CD4-positive, alpha-beta memory T cell (primary cell): ENCODE measurements at regions of chr13 and their contacts with region 1.

Region 1: DNA sequence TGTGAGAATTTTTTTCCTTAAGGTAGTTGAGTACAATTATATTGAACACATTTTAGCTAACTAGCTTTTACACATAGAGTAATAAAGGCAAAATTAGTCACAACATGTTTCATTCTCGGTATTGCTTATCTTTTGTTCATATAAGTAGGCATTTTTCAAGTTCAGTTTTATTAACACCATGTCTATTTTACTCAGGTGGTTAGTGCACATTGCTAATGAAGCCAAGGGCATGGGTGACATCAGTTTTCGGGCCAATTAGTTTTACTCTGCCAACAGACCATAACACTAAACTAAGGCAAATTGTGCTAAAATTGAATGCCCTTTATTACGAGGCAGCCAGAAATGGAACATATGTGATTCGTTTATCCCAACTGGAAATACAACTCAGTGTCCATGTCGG is 19.6 kb upstream of the PCDH17 start:
- DNase-seq: no peak
- H3K4me3 ChIP-seq: no peak overlapping the region
- H3K4me3 Mint-ChIP-seq: no peak overlapping the region
- H3K27ac ChIP-seq: no peak overlapping the region
- H3K27ac Mint-ChIP-seq: no peak overlapping the region
- H3K4me1 ChIP-seq: no peaks in the 10 kb centered on the region
- H3K4me1 Mint-ChIP-seq: no peaks in the 10 kb centered on the region
- H3K27me3 ChIP-seq: no peaks in the 10 kb centered on the region
- H3K27me3 Mint-ChIP-seq: no peaks in the 10 kb centered on the region

Region 2: GRCh38 chr13:57624565-57625435 is 12.8 kb after region 1 on chr13:
- CTCF ChIA-PET with region 1: interaction called, 12 read pairs
- POLR2A ChIA-PET with region 1: no interaction called
- intact Hi-C with region 1: no loop called
- DNase-seq: peak in 1 of 5 donors; percentile 20
- H3K4me3 ChIP-seq: no peak overlapping the region
- H3K4me3 Mint-ChIP-seq: no peak overlapping the region
- H3K27ac ChIP-seq: no peak overlapping the region
- H3K27ac Mint-ChIP-seq: no peak overlapping the region
- H3K4me1 ChIP-seq: peaks cover 6% of the 10 kb centered on the region
- H3K4me1 Mint-ChIP-seq: peaks cover 8 to 14% (median 12%) of the 10 kb centered on the region in 4 donors
- H3K27me3 ChIP-seq: peaks cover 4% of the 10 kb centered on the region
- H3K27me3 Mint-ChIP-seq: peaks cover 14 to 20% of the 10 kb centered on the region in 2 donors

Region 3: DNA sequence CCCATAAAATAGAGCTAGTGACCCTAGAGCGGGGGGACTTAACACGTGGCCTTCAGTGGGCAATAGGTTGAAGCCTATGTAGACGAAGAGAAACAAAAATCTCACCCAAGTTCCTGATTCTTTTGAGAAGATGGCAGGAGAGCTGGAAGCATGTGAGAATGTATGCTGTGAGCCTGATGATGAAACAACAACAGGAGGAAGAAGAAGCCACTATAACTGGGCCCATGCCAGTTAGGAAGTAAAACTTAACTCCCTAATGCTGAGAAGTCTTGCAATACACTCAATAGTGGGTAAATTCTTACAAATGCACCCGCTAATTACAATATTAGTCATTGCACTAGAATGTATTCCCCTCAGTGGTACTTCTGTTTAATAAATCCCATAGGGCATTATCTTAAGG is 28.6 kb after region 1 on chr13:
- CTCF ChIA-PET with region 1: no interaction called
- POLR2A ChIA-PET with region 1: no interaction called
- intact Hi-C with region 1: no loop called
- DNase-seq: no peak
- H3K4me3 ChIP-seq: no peak overlapping the region
- H3K4me3 Mint-ChIP-seq: no peak overlapping the region
- H3K27ac ChIP-seq: no peak overlapping the region
- H3K27ac Mint-ChIP-seq: no peak overlapping the region
- H3K4me1 ChIP-seq: no peaks in the 10 kb centered on the region
- H3K4me1 Mint-ChIP-seq: no peaks in the 10 kb centered on the region
- H3K27me3 ChIP-seq: no peaks in the 10 kb centered on the region
- H3K27me3 Mint-ChIP-seq: no peaks in the 10 kb centered on the region

Region 4: GRCh38 chr13:57724486-57725272 is 112.7 kb after region 1 on chr13:
- CTCF ChIA-PET with region 1: no interaction called
- POLR2A ChIA-PET with region 1: no interaction called
- intact Hi-C with region 1: no loop called
- DNase-seq: no peak
- H3K4me3 ChIP-seq: no peak overlapping the region
- H3K4me3 Mint-ChIP-seq: no peak overlapping the region
- H3K27ac ChIP-seq: no peak overlapping the region
- H3K27ac Mint-ChIP-seq: no peak overlapping the region
- H3K4me1 ChIP-seq: no peaks in the 10 kb centered on the region
- H3K4me1 Mint-ChIP-seq: no peaks in the 10 kb centered on the region
- H3K27me3 ChIP-seq: no peaks in the 10 kb centered on the region
- H3K27me3 Mint-ChIP-seq: no peaks in the 10 kb centered on the region